OCI-LY7 (cell line): ENCODE measurements at regions of chr11 and their contacts with region 1.

Region 1: DNA sequence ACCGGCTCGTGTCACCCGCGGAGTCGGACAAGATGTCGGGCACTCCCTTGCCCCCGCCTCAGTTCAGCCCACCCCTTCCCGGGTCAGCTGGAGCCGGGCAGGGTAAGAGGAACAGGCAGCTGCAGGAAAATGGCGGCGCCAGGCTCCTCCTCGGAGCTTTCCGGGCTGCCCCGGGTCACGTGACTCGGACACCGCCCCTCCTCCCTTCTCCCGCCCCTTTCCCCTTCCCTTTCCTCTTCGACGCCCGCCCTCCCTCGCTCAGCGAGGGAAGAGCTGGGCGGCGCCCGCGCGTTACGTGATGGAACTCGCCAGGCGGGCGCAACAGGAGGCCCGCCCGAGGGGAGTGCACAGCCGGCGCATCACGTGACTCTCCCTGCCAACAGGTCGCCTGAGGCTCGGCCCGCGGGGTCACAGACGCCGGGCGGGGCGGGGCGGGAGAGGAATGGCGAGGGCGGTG is at the start of gene PICALM:
- DNase-seq: peak; percentile 99
- H3K4me3 ChIP-seq: peak within 1 kb of the TSS; percentile 82
- H3K27ac ChIP-seq: peak within 1 kb of the TSS; percentile 70
- H3K4me1 ChIP-seq: peaks cover 38% of the 10 kb centered on the region
- CTCF ChIP-seq: no peak
- total RNA-seq, gene PICALM: 77.9 and 84.3 TPM in 2 replicates

Region 2: DNA sequence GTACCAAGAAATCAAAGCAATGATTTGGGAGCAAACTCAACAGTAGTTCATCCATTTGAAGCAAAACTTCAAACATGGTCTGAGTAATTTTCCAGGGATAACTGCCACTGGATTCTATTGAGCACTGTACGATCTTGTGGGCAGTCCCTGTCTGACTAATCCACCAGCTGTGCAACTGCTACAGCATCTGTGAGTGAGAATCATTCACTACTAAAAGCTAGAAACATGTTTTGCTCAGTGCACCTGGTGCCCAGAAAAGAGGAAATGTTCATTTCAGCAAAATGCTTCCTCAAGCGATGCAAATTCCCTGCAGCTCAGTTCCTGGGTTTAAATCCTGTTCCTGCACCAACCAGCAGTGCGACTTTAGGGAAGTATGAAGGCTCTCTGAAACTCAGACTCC is 1519.8 kb before region 1 on chr11:
- CTCF ChIA-PET with region 1: no interaction called
- POLR2A ChIA-PET with region 1: no interaction called
- intact Hi-C with region 1: loop called (anchors 5 kb)
- DNase-seq: peak; percentile 95
- H3K4me3 ChIP-seq: peak overlapping the region; percentile 50
- H3K27ac ChIP-seq: peak overlapping the region; percentile 95
- H3K4me1 ChIP-seq: peaks cover 35% of the 10 kb centered on the region
- CTCF ChIP-seq: no peak

Region 3: GRCh38 chr11:85627998-85628770 is 440.8 kb before region 1 on chr11 and contains the start of gene TMEM126B:
- CTCF ChIA-PET with region 1: no interaction called
- POLR2A ChIA-PET with region 1: no interaction called
- intact Hi-C with region 1: loop called (anchors 10 kb)
- DNase-seq: peak; percentile 96
- H3K4me3 ChIP-seq: peak within 1 kb of the TSS; percentile 96
- H3K27ac ChIP-seq: peak within 1 kb of the TSS; percentile 40
- H3K4me1 ChIP-seq: peaks cover 35% of the 10 kb centered on the region
- CTCF ChIP-seq: no peak
- total RNA-seq, gene TMEM126B: 45.4 and 47.4 TPM in 2 replicates

Region 4: DNA sequence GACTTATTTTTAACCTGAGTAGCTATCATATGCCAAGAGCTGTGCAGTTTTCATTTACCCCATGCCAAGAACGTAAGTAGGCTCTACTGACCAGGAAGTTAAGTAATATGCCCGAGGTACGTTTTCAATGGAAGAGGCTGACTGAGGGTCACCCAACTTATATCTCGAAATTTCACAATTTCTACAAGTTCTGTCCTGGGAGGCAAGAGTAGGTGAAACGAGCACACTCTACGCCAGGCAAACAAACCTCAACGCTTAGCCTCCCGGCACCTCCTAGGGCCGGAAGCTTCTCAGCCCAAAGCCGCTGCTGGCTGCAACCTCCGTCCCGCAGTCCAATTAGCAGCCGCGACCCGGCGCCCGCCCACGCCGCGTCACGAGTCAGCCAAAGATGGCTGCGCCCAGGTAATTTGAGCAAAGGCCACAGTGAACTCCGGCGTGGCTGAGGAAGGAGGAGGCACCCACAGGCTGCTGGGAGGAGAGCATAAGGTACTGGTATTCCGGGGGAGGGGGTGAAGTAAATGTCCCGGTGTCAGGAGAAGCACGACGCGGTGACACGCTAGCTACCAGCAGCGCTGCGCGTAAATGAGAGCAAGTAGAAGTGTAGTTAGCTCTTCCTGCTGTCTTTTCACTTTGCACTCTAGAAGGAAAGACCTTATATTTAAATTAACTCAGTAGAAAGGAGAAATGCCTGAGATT is 421.2 kb before region 1 on chr11 and contains the start of gene TMEM126A:
- CTCF ChIA-PET with region 1: no interaction called
- POLR2A ChIA-PET with region 1: interaction called, 3 read pairs
- intact Hi-C with region 1: loop called (anchors 5 kb)
- DNase-seq: peak; percentile 91
- H3K4me3 ChIP-seq: peak within 1 kb of the TSS; percentile 74
- H3K27ac ChIP-seq: peak within 1 kb of the TSS; percentile 72
- H3K4me1 ChIP-seq: peaks cover 33% of the 10 kb centered on the region
- CTCF ChIP-seq: no peak
- total RNA-seq, gene TMEM126A: 16.8 and 16.9 TPM in 2 replicates

Region 5: DNA sequence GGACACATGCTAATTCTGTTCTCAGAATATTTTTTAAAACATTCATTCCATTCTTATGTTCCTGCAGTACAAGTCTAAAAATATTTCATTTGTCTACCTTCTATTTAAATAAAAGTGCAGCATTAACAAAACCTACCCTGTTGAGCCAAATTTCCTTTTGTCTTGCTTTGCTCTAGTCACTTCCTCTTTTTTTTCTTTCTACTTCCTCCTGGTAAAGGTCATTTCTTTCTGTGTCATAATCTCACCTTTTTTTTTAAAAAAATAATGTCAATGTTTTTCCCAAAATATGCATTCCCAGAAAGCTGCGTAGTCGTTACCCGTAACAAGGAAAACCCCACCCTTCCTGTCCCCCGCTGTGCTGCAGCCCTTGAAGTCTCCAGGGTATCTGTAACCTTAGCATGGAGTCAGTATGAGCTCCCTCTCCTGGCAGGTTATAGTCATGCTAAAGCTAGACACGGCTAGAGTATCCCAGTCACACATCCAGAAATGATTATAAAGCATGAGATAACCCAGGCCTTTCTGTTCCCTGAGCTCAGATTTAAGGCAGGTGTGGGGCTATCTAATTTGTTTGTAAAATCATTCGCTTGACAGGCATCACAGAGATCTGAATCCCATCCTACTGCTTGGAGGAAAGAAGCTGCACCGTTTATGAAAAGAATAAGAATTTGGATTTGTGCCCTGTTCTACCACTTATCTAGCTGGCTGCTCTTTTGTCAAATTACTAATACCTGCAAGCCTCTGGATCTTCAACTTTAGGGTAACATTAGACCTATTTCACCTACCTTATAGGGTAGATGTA is 124.5 kb after region 1 on chr11:
- CTCF ChIA-PET with region 1: interaction called, 18 read pairs
- POLR2A ChIA-PET with region 1: interaction called, 9 read pairs
- intact Hi-C with region 1: loop called (anchors 2 kb)
- DNase-seq: peak; percentile 87
- H3K4me3 ChIP-seq: peak overlapping the region; percentile 62
- H3K27ac ChIP-seq: peak overlapping the region; percentile 76
- H3K4me1 ChIP-seq: peaks cover 23% of the 10 kb centered on the region
- CTCF ChIP-seq: peak; percentile 97

Region 6: DNA sequence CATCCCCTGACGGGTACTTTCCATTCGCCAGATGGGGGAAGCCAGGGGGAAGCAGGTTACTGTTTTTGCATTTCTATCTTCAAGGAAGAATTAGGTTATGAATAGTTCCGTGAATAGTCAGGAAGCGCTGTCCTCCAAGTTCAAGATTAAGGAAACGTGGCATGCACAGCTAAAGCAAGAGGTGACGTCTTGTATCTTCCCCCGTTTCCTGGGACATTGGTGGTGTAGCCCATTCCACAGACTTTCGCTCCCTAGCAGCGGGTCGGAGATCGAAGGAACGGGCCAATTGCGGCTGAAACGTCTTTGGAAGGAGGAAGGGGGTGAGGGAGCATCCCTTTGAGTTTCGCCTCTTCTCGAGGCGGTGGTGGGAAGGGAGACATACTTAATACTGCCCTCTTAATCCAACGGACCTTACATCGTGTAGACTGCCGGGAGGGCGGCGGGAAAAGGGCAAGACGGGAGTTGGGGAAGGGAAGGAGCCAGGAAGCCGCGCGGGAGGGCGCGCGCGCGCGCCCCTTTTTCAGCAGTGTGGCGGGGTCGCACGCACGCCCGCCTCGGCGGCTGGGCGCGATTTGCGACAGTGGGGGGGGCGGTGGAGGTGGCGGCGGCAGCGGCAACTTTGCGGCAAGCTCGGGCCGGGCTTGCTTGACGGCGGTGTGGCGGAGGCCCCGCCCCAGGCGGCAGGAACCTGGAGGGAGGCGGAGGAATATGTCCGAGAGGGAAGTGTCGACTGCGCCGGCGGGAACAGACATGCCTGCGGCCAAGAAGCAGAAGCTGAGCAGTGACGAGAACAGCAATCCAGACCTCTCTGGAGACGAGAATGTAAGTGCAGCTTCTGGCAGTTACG is 175.8 kb after region 1 on chr11 and contains the start of gene EED:
- CTCF ChIA-PET with region 1: no interaction called
- POLR2A ChIA-PET with region 1: interaction called, 9 read pairs
- intact Hi-C with region 1: loop called (anchors 1 kb)
- DNase-seq: peak; percentile 95
- H3K4me3 ChIP-seq: peak within 1 kb of the TSS; percentile 93
- H3K27ac ChIP-seq: peak within 1 kb of the TSS; percentile 84
- H3K4me1 ChIP-seq: peaks cover 55% of the 10 kb centered on the region
- CTCF ChIP-seq: no peak
- total RNA-seq, gene EED: 25.2 and 30.4 TPM in 2 replicates